IMR-90 (cell line): ENCODE measurements at regions of chr3 and their contacts with region 1.

Region 1: GRCh38 chr3:183161552-183162336 is 790 bp downstream of the LAMP3 start:
- DNase-seq: no peak
- ATAC-seq: no peak
- H3K4me3 ChIP-seq: no peak overlapping the region; the same call in 1 of the 2 replicates
- H3K27ac ChIP-seq: no peak overlapping the region
- H3K4me1 ChIP-seq: no peaks in the 10 kb centered on the region
- H3K27me3 ChIP-seq: peaks cover 26% of the 10 kb centered on the region
- CTCF ChIP-seq: no peak
- POLR2A ChIP-seq: no peak
- RAD21 ChIP-seq: no peak

Region 2: DNA sequence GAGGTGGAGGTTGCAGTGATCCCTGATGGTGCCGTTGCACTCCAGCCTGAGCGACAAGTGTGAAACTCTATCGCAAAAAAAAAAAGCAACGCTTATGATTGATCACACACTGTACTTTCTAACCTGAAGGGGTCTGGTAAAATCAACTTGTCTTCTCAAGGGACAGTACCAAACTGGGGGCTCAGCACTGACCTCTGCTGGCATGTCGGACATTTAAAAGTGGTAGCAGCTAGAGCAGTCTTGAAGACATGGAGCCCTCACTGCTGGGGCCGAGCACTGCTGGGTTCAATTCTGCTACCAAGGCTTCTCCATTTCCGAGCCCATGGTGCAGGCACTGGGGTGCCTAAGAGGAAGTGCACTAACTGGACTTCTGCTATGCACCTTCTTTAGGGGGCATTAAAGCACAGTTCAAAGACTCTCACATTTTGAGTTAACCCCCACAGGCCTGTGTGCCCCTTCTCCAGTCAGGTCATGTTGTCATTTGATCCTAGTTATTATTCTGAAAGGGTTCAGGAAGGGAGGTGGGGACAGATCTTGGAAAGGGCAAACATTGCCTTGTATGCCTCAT is 27.2 kb after region 1 on chr3:
- CTCF ChIA-PET with region 1: interaction called, 11 read pairs
- POLR2A ChIA-PET with region 1: no interaction called
- dilution Hi-C with region 1: no loop called
- in situ Hi-C with region 1: no loop called
- intact Hi-C with region 1: no loop called
- DNase-seq: no peak
- ATAC-seq: no peak
- H3K4me3 ChIP-seq: no peak overlapping the region
- H3K27ac ChIP-seq: no peak overlapping the region
- H3K4me1 ChIP-seq: peaks cover 10% of the 10 kb centered on the region
- H3K27me3 ChIP-seq: no peaks in the 10 kb centered on the region; the same call in 1 of the 2 replicates
- CTCF ChIP-seq: peak; percentile 35
- POLR2A ChIP-seq: no peak
- RAD21 ChIP-seq: no peak